BJ (cell line): ENCODE measurements at regions of chr14 and their contacts with region 1.

Region 1: GRCh38 chr14:88013750-88014349 is 8.9 kb downstream of the GPR65 start:
- DNase-seq: no peak
- H3K4me3 ChIP-seq: no peak overlapping the region
- H3K27me3 ChIP-seq: no peaks in the 10 kb centered on the region
- CTCF ChIP-seq: peak; percentile 92

Region 2: GRCh38 chr14:88168498-88169165 is 154.8 kb after region 1 on chr14:
- CTCF ChIA-PET with region 1: interaction called, 58 read pairs
- POLR2A ChIA-PET with region 1: no interaction called
- DNase-seq: no peak
- H3K4me3 ChIP-seq: no peak overlapping the region
- H3K27me3 ChIP-seq: no peaks in the 10 kb centered on the region
- CTCF ChIP-seq: peak; percentile 78

Region 3: DNA sequence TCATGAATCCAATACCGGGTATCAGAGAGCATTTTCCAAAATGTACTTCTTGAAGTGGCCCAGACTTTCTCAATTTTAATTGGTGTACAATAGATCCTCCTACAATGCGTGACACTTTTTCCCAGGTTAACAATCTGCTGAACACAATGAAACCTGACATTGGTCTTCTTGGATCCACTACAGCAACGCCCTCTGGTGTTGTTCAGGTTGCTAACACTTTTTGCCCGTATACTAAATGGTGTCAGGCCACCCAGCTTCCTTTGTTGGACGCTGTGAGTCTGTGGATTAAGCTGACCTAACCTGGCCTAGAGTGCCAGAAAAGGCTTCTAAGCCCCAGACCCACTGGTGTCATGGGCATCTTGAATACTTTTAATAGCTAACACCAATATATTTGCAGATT is 220.1 kb after region 1 on chr14:
- CTCF ChIA-PET with region 1: interaction called, 11 read pairs
- POLR2A ChIA-PET with region 1: no interaction called
- DNase-seq: no peak
- H3K4me3 ChIP-seq: no peak overlapping the region
- H3K27me3 ChIP-seq: no peaks in the 10 kb centered on the region
- CTCF ChIP-seq: 0 out of 2 replicates have a peak, but pooled peaks have one; percentile 20